Transverse colon (tissue), 4 donors: ENCODE measurements at regions of chr5 and their contacts with region 1.

Region 1: GRCh38 chr5:141387233-141387949 is at the start of gene PCDHGB4:
- DNase-seq: no peak
- H3K4me3 ChIP-seq: peak within 1 kb of the TSS in 1 of 4 donors; percentile 21
- H3K27ac ChIP-seq: no peak within 1 kb of the TSS
- H3K4me1 ChIP-seq: no peaks in the 10 kb centered on the region
- H3K27me3 ChIP-seq: peaks cover 12% of the 10 kb centered on the region
- CTCF ChIP-seq: peak in 1 of 5 experiments; percentile 6
- EP300 ChIP-seq: no peak
- POLR2A ChIP-seq: no peak
- total RNA-seq, gene PCDHGB4: 0.40 to 4.4 (median 2.4) TPM

Region 2: GRCh38 chr5:141223112-141223783 is 164.1 kb before region 1 on chr5 and contains the start of gene PCDHB14:
- in situ Hi-C with region 1: loop called in 1 of 4 experiments (anchors 25 kb)
- intact Hi-C with region 1: no loop called
- DNase-seq: no peak
- H3K4me3 ChIP-seq: peak within 1 kb of the TSS in 1 of 4 donors; percentile 28
- H3K27ac ChIP-seq: no peak within 1 kb of the TSS
- H3K4me1 ChIP-seq: peaks cover 0 to 2% (median 0%) of the 10 kb centered on the region in 4 donors
- H3K27me3 ChIP-seq: no peaks in the 10 kb centered on the region
- CTCF ChIP-seq: peak in 2 of 5 experiments; percentile 6 to 16
- EP300 ChIP-seq: no peak
- POLR2A ChIP-seq: no peak
- total RNA-seq, gene PCDHB14: 1.4 to 3.3 (median 2.8) TPM

Region 3: GRCh38 chr5:141835928-141836670 is 448.7 kb after region 1 on chr5:
- in situ Hi-C with region 1: no loop called
- intact Hi-C with region 1: no loop called
- DNase-seq: no peak
- H3K4me3 ChIP-seq: no peak overlapping the region
- H3K27ac ChIP-seq: peak overlapping the region in 3 of 4 donors; percentile 21 to 53 (median 32)
- H3K4me1 ChIP-seq: peaks cover 0 to 33% (median 7%) of the 10 kb centered on the region in 4 donors
- H3K27me3 ChIP-seq: peaks cover 6% of the 10 kb centered on the region
- CTCF ChIP-seq: no peak
- EP300 ChIP-seq: no peak
- POLR2A ChIP-seq: no peak